Heart right ventricle (tissue), 16 donors: ENCODE measurements at regions of chr15 and their contacts with region 1.

Region 1: DNA sequence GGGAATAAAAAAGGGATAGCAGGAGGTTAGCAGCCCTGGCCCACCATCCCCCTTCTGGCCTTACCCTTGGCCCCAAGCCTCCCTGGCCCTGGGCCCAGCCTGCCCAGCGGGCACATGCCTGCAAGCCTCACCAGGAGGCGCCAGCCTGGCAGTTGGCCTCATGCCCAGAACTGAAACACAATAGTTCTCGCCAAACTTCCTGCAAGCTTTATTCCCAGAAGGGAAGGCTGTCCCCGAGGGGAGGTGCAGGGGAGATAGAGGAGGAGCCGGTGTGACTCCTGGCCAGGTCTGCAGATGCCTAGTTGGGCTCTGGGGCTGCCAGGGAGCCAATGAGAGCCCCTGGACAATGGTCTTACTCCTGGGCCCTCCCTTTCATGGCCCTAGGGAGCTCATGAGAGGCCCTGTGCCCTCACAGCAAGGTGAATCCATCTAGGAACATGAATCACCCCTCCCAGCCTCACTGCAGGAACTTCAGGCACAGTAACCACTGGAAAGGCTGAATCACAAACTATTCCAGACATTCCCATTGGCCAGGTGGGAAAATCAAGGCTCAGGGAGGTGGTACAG is 4.0 kb downstream of the CCDC33 start:
- DNase-seq: peak; percentile 88 to 91
- ATAC-seq: peak; percentile 83 to 95 (median 90)
- H3K4me3 ChIP-seq: no peak overlapping the region
- H3K27ac ChIP-seq: peak overlapping the region in 9 of 10 donors; percentile 26 to 75 (median 61)
- H3K4me1 ChIP-seq: peaks cover 23 to 43% (median 39%) of the 10 kb centered on the region in 9 donors
- H3K27me3 ChIP-seq: peaks cover 0 to 7% (median 0%) of the 10 kb centered on the region in 7 donors
- CTCF ChIP-seq: peak in 8 of 9 donors; percentile 29 to 70 (median 52)

Region 2: GRCh38 chr15:73908030-73908821 is 331.9 kb before region 1 on chr15:
- intact Hi-C with region 1: no loop called
- DNase-seq: peak; percentile 83 to 86
- ATAC-seq: peak; percentile 91 to 97 (median 96)
- H3K4me3 ChIP-seq: no peak overlapping the region
- H3K27ac ChIP-seq: no peak overlapping the region
- H3K4me1 ChIP-seq: peaks cover 0 to 16% (median 5%) of the 10 kb centered on the region in 9 donors
- H3K27me3 ChIP-seq: no peaks in the 10 kb centered on the region
- CTCF ChIP-seq: peak; percentile 80 to 95 (median 94)

Region 3: DNA sequence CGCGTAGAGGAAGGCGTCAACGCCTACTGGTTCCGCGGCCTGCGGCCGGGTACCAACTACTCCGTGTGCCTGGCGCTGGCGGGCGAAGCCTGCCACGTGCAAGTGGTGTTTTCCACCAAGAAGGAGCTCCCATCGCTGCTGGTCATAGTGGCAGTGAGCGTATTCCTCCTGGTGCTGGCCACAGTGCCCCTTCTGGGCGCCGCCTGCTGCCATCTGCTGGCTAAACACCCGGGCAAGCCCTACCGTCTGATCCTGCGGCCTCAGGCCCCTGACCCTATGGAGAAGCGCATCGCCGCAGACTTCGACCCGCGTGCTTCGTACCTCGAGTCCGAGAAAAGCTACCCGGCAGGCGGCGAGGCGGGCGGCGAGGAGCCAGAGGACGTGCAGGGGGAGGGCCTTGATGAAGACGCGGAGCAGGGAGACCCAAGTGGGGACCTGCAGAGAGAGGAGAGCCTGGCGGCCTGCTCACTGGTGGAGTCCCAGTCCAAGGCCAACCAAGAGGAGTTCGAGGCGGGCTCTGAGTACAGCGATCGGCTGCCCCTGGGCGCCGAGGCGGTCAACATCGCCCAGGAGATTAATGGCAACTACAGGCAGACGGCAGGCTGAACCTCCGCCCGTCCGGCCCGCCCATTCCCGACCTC is 105.6 kb before region 1 on chr15:
- intact Hi-C with region 1: loop called in 4 of 10 experiments (anchors 5 to 10 kb)
- DNase-seq: peak in 1 of 2 donors; percentile 66
- ATAC-seq: peak in 1 of 8 donors; percentile 33
- H3K4me3 ChIP-seq: no peak overlapping the region
- H3K27ac ChIP-seq: peak overlapping the region in 1 of 10 donors; percentile 87
- H3K4me1 ChIP-seq: peaks cover 13 to 70% (median 55%) of the 10 kb centered on the region in 9 donors
- H3K27me3 ChIP-seq: peaks cover 0 to 92% (median 61%) of the 10 kb centered on the region in 7 donors
- CTCF ChIP-seq: peak in 8 of 9 donors; percentile 31 to 61 (median 50)

Region 4: GRCh38 chr15:74156678-74157411 is 83.2 kb before region 1 on chr15:
- intact Hi-C with region 1: loop called in 1 of 10 experiments (anchors 10 kb)
- DNase-seq: peak in 1 of 2 donors; percentile 33
- ATAC-seq: peak; percentile 76 to 94 (median 90)
- H3K4me3 ChIP-seq: no peak overlapping the region
- H3K27ac ChIP-seq: peak overlapping the region in 8 of 10 donors; percentile 2 to 69 (median 59)
- H3K4me1 ChIP-seq: peaks cover 15 to 51% (median 34%) of the 10 kb centered on the region in 9 donors
- H3K27me3 ChIP-seq: no peaks in the 10 kb centered on the region
- CTCF ChIP-seq: no peak

Region 5: GRCh38 chr15:74302821-74303359 is 62.8 kb after region 1 on chr15:
- intact Hi-C with region 1: loop called in 1 of 10 experiments (anchors 5 kb)
- DNase-seq: peak; percentile 38 to 47
- ATAC-seq: peak; percentile 23 to 74 (median 56)
- H3K4me3 ChIP-seq: no peak overlapping the region
- H3K27ac ChIP-seq: no peak overlapping the region
- H3K4me1 ChIP-seq: peaks cover 0 to 11% (median 0%) of the 10 kb centered on the region in 9 donors
- H3K27me3 ChIP-seq: peaks cover 0 to 71% (median 34%) of the 10 kb centered on the region in 7 donors
- CTCF ChIP-seq: peak; percentile 53 to 76 (median 67)